Heart left ventricle (tissue), 16 donors: ENCODE measurements at regions of chr11 and their contacts with region 1.

Region 1: DNA sequence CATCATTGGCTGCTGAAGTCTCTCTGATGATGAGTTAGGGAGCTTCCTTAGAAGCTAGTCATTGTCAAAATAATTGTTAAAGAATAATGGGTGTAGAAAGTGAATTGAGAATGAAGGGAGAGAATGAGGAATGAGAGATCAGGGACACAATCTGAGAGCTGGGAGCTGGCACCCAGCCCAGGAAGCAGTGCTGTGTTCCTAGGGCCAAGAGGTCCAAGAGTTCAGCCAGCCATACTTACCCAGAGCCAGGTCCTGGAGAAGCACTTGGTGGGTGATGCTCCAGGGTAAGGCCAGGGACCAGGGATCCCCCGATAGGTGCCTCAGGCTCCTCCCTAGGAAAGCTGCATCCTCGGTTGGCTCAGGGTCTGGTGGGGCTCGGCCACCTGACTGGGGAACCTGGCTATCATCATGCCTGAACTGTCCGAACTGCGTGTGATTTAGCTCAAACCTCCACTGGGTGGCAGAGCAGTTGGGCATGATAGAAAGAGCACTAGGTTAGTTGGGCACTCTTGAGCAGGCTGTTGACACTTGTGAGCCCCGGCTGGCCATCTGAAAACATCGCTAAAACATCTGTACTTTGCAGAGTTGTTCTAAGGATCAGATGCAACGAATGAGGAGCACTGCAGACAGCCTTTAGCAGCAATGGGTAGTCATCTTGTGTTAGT is 123.9 kb upstream of the NCAM1 start:
- DNase-seq: peak in 4 of 5 donors; percentile 37 to 56 (median 42)
- ATAC-seq: peak; percentile 34 to 72 (median 64)
- H3K4me3 ChIP-seq: no peak overlapping the region
- H3K27ac ChIP-seq: no peak overlapping the region
- H3K4me1 ChIP-seq: peaks cover 0 to 23% (median 5%) of the 10 kb centered on the region in 12 donors
- H3K27me3 ChIP-seq: no peaks in the 10 kb centered on the region
- CTCF ChIP-seq: peak in 10 of 12 donors; percentile 24 to 50 (median 42)
- POLR2A ChIP-seq: no peak

Region 2: DNA sequence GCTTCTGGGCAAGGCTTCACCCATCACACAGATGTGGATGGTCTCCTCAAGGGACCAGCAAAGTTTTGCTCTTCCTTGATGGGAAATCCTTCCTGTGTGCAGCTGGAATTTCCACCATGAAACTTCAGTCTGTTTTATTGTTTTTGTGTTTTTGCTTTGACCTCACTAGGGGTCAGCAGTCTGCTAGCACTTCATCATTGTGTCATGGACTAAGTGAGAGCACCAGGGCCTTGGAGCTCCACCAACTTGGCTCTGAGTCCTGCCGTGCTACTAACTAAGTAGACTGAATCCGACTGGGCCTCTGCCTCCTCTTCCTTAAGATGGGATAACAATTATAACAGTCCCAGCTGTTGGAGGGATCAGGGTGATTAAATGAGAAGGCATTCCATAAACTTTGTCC is 181.9 kb before region 1 on chr11:
- intact Hi-C with region 1: loop called in 2 of 10 experiments (anchors 10 kb)
- DNase-seq: peak; percentile 81 to 91 (median 87)
- ATAC-seq: peak; percentile 50 to 84 (median 78)
- H3K4me3 ChIP-seq: no peak overlapping the region
- H3K27ac ChIP-seq: peak overlapping the region in 8 of 12 donors; percentile 4 to 65 (median 40)
- H3K4me1 ChIP-seq: peaks cover 0 to 51% (median 21%) of the 10 kb centered on the region in 12 donors
- H3K27me3 ChIP-seq: no peaks in the 10 kb centered on the region
- CTCF ChIP-seq: peak in 4 of 12 donors; percentile 24 to 42 (median 28)
- POLR2A ChIP-seq: no peak

Region 3: DNA sequence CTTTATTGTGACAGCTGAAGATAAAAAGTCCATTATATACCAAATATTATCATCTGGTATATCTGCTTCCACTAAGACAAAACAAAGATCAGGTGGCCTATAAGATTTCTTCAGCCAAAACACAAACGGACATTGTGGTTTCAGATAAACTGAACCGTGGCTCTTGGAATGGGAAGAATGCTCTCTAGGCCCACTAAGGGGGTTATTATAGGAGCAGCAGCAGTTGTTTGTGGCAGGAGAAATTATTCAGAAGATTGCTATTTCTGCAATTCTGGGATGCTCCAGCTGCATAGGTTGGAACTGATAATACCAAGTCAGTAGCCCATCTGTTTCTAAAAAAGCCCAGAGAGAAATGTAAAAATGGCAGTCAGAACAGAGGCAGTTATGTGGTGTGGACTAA is 269.2 kb after region 1 on chr11:
- intact Hi-C with region 1: loop called in 5 of 10 experiments (anchors 10 kb)
- DNase-seq: no peak
- ATAC-seq: no peak
- H3K4me3 ChIP-seq: no peak overlapping the region
- H3K27ac ChIP-seq: peak overlapping the region in 10 of 12 donors; percentile 14 to 85 (median 71)
- H3K4me1 ChIP-seq: peaks cover 0 to 43% (median 8%) of the 10 kb centered on the region in 12 donors
- H3K27me3 ChIP-seq: no peaks in the 10 kb centered on the region
- CTCF ChIP-seq: no peak
- POLR2A ChIP-seq: no peak

Region 4: DNA sequence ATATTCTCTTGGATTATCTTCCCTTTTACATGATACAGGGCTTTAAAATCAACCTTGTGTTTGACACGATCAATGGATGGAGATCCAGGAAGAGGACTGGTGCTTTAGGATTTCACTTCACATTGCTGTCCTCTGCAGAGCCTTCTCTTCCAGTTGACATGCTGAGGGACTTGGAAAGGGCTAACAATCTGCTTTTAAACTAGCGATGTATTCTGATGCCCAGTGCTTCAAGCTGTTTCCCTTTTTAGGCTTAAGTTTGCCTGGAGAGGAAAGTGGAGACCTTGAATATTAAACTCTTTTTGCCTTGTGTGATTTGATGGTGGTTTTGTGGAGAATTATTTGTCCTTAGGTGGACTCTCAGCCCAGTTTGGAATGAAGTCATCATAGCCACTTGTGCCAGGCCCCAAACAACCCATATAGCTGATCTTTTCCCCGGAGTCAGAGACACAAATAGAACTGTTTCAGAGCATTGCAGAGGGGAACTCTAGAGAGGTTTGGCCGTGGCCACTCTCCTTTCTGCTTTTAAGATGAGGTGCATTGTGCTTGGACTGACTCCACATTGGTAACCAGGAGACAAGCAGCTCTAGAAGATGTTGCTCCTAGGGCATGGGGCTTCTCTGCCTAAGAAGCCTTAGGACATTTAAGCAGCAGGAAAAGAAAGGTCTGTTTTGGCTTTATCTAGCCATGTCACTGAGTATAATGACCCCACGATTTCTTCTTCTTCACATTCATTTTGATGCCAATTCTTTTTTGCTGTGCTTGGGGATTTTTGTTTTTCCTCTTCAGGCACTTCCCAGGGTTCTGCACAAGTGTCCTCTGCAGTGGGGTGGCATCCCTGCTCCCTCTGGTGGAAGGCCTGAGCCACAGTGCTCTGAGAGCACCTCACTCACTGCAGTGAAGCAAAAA is 276.8 kb after region 1 on chr11:
- intact Hi-C with region 1: loop called in 6 of 10 experiments (anchors 5 to 10 kb)
- DNase-seq: peak; percentile 49 to 67 (median 64)
- ATAC-seq: peak; percentile 89 to 94 (median 91)
- H3K4me3 ChIP-seq: no peak overlapping the region
- H3K27ac ChIP-seq: peak overlapping the region in 9 of 12 donors; percentile 41 to 79 (median 62)
- H3K4me1 ChIP-seq: peaks cover 0 to 58% (median 21%) of the 10 kb centered on the region in 12 donors
- H3K27me3 ChIP-seq: no peaks in the 10 kb centered on the region
- CTCF ChIP-seq: peak; percentile 32 to 77 (median 65)
- POLR2A ChIP-seq: no peak

Region 5: GRCh38 chr11:113119074-113119473 is 281.8 kb after region 1 on chr11:
- intact Hi-C with region 1: loop called in 5 of 10 experiments (anchors 5 to 10 kb)
- DNase-seq: peak in 1 of 5 donors; percentile 18
- ATAC-seq: peak; percentile 62 to 87 (median 68)
- H3K4me3 ChIP-seq: no peak overlapping the region
- H3K27ac ChIP-seq: peak overlapping the region in 8 of 12 donors; percentile 24 to 63 (median 36)
- H3K4me1 ChIP-seq: peaks cover 0 to 54% (median 20%) of the 10 kb centered on the region in 12 donors
- H3K27me3 ChIP-seq: no peaks in the 10 kb centered on the region
- CTCF ChIP-seq: no peak
- POLR2A ChIP-seq: no peak

Region 6: DNA sequence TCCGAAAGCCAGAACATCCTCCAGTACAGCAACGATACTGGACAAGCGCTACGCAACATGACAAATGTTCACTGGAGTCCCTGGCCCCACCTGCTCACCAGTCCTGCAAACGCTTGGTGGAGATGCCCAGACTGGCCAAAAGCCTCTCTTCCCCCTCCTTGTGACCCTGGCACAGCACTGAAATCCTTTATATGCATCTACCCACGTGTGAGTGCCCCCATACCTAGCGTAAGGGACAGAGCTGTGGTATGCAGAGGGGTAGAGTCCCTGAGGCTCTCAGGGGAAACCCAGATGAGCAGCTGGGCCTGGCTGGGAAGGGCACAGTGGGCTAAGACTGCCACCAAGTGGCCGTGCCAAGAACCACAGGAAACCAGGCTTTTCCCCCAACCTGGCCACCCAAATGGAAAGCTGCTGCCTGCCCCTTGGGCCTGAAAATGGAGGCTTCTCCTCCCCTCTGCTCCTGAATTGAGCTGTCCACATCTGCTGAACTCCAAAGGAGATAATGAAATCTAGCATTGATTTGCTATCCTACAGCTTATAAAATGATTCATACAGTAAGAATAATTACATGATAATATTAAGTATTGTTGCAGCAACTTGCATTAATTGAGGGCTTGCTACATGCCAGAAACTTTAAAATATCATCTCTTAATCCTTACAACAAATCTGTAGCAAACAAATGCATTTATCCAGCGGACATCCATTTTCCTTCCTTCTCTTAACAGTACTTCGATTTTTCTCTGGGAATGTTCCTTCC is 452.3 kb after region 1 on chr11:
- intact Hi-C with region 1: loop called in 1 of 10 experiments (anchors 10 kb)
- DNase-seq: peak; percentile 42 to 77 (median 54)
- ATAC-seq: peak; percentile 73 to 79 (median 77)
- H3K4me3 ChIP-seq: no peak overlapping the region
- H3K27ac ChIP-seq: no peak overlapping the region
- H3K4me1 ChIP-seq: peaks cover 0 to 9% (median 0%) of the 10 kb centered on the region in 12 donors
- H3K27me3 ChIP-seq: peaks cover 0 to 8% (median 0%) of the 10 kb centered on the region in 9 donors
- CTCF ChIP-seq: peak; percentile 79 to 93 (median 88)
- POLR2A ChIP-seq: no peak